ENCODE measurements at regions of chr17 and their contacts with region 1.

Region 1: DNA sequence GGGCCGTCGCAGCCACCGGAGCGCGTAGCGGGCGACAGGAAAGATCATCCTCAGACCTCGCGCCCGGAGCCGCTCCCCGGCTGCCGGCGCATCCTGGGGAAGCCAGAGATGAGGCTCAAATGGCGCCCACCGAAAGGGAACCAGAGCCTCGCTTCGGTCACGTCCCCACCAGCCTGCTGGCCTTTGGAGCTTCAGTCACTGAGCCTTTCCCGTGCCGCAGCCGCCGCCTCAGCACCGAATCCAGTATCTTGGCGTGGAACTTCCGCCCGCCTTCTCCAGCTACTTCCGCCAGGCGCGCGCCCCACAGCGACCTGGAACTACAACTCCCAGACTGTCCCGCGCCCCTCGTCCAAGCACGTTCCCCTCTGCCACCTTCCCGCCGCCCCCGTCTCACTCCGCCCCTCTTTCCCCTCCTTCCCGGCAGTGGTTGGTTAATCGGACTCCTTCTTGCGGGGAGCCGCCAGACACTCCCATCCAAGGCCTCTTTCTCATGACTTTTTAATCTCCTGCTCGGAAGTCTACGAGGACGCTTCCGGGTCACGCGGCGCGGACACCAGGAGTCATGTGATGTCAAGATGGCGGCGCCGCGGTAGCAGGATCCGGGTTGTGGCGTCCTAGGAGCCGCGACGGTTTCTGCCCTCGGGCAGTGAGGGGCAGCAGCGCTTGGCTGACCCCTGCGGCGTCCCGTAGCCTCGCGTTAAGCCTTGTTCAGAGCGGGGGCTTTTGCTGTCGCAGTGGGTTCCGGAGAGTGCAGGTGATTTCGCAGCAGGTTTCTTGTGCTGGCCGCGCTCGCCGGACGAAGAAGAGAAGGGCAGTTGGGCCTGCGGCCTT is at the starts of genes SMCR8 and TOP3A:
- DNase-seq: peak; percentile 86 to 99 (median 98)
- ATAC-seq: peak; percentile 96
- H3K4me3 ChIP-seq: peak within 1 kb of the TSS; percentile 95
- H3K4me3 Mint-ChIP-seq: peak within 1 kb of the TSS; percentile 89 to 98 (median 93)
- H3K27ac ChIP-seq: peak within 1 kb of the TSS; percentile 93
- H3K27ac Mint-ChIP-seq: peak within 1 kb of the TSS; percentile 92 to 99 (median 95)
- H3K4me1 ChIP-seq: peaks cover 50 to 54% of the 10 kb centered on the region in 2 donors
- H3K4me1 Mint-ChIP-seq: peaks cover 61 to 88% (median 83%) of the 10 kb centered on the region in 7 donors
- H3K27me3 ChIP-seq: no peaks in the 10 kb centered on the region
- H3K27me3 Mint-ChIP-seq: peaks cover 0 to 2% (median 0%) of the 10 kb centered on the region in 5 donors
- total RNA-seq, gene SMCR8: 29.0 to 61.7 (median 52.1) TPM
- total RNA-seq, gene TOP3A: 39.0 to 74.9 (median 43.6) TPM

Region 2: DNA sequence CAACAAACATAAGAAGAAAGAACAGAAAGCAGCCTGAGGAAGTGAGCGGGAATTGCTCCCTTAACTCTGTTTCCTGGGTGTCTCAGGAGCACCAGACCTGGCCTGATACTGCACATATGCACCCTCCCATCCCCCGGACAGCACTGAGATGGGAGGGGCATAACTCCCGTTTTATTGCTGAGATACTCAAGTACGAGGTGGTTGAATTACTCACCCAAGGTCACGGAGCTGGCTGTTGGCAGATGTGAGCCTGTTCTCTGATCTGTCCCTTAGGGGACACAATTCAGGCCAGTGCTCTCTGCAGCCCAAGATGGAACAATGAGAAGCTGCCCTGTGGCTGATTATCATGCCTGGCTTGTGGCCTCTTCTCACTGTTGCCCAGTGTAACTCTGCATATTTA is 847.2 kb before region 1 on chr17:
- CTCF ChIA-PET with region 1: no interaction called
- POLR2A ChIA-PET with region 1: no interaction called
- intact Hi-C with region 1: no loop called
- DNase-seq: no peak
- ATAC-seq: no peak
- H3K4me3 ChIP-seq: no peak overlapping the region
- H3K4me3 Mint-ChIP-seq: no peak overlapping the region
- H3K27ac ChIP-seq: no peak overlapping the region
- H3K27ac Mint-ChIP-seq: no peak overlapping the region
- H3K4me1 ChIP-seq: no peaks in the 10 kb centered on the region
- H3K4me1 Mint-ChIP-seq: no peaks in the 10 kb centered on the region
- H3K27me3 ChIP-seq: no peaks in the 10 kb centered on the region
- H3K27me3 Mint-ChIP-seq: peaks cover 12 to 20% (median 17%) of the 10 kb centered on the region in 5 donors

Region 3: DNA sequence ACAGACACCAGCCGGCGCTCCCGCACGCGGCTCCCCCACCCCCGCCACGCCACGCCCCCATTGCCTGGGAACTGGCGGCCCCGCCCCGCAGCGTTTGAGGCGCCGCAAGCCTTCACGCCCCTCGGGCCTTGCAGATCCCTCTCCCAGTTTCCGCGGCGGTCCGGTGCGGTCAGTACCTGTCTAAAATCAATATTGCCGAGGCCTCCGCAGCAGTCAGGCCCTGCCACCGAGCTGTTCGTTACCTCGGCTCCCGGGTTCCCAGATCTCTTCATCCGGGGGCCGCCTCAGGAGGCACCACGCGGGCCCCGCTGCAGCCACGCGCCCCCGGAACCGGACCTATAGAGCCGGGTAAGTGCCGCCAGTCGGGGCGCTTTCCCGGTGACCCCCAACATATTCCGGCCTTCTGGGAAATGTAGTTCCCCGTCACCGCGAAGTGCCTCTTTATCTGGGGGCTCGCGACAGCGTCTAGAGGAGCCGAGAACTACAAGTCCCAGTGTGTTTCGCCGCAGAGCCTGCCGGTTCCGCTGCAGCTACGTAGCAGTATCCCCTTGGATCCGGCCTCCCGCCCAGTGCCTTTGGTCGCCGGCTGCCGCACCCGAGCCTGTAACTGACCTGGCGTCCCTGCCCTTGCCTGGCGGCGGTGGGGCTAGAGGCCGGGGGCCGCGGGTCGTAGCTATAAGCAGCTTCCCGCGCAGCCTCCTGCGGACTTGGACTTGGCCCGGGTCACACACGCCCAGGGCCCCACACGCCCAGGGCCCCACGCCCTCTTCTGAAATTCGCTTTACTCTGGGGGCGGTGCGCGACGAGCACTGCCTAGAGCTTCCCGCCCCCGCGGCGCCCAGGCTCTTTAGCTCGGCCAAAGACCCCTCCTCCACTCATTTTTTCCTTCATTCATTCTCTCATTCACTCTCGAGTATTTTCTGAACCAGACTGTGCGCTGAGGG is 723.3 kb before region 1 on chr17 and contains the start of gene PEMT:
- CTCF ChIA-PET with region 1: no interaction called
- POLR2A ChIA-PET with region 1: no interaction called
- intact Hi-C with region 1: loop called in 1 of 2 experiments (anchors 10 kb)
- DNase-seq: peak; percentile 78 to 96 (median 93)
- ATAC-seq: peak; percentile 95
- H3K4me3 ChIP-seq: peak within 1 kb of the TSS; percentile 93
- H3K4me3 Mint-ChIP-seq: peak within 1 kb of the TSS; percentile 87 to 99 (median 93)
- H3K27ac ChIP-seq: peak within 1 kb of the TSS; percentile 79
- H3K27ac Mint-ChIP-seq: peak within 1 kb of the TSS; percentile 86 to 100 (median 93)
- H3K4me1 ChIP-seq: peaks cover 16 to 18% of the 10 kb centered on the region in 2 donors
- H3K4me1 Mint-ChIP-seq: peaks cover 14 to 32% (median 19%) of the 10 kb centered on the region in 7 donors
- H3K27me3 ChIP-seq: no peaks in the 10 kb centered on the region
- H3K27me3 Mint-ChIP-seq: no peaks in the 10 kb centered on the region
- total RNA-seq, gene PEMT: 9.5 to 15.0 (median 12.1) TPM

Region 4: GRCh38 chr17:18087610-18088491 is 227.1 kb before region 1 on chr17 and contains the start of gene DRG2:
- CTCF ChIA-PET with region 1: interaction called, 3 read pairs
- POLR2A ChIA-PET with region 1: no interaction called
- intact Hi-C with region 1: loop called in 1 of 2 experiments (anchors 2 kb)
- DNase-seq: peak; percentile 79 to 94 (median 85)
- ATAC-seq: peak; percentile 98
- H3K4me3 ChIP-seq: peak within 1 kb of the TSS; percentile 84
- H3K4me3 Mint-ChIP-seq: peak within 1 kb of the TSS; percentile 97 to 100 (median 98)
- H3K27ac ChIP-seq: peak within 1 kb of the TSS; percentile 85
- H3K27ac Mint-ChIP-seq: peak within 1 kb of the TSS; percentile 96 to 99 (median 98)
- H3K4me1 ChIP-seq: peaks cover 9 to 12% of the 10 kb centered on the region in 2 donors
- H3K4me1 Mint-ChIP-seq: peaks cover 19 to 35% (median 27%) of the 10 kb centered on the region in 7 donors
- H3K27me3 ChIP-seq: no peaks in the 10 kb centered on the region
- H3K27me3 Mint-ChIP-seq: no peaks in the 10 kb centered on the region
- total RNA-seq, gene DRG2: 39.6 to 54.7 (median 48.8) TPM

Region 5: GRCh38 chr17:18183334-18184142 is 131.4 kb before region 1 on chr17 and contains the start of gene ALKBH5:
- CTCF ChIA-PET with region 1: no interaction called
- POLR2A ChIA-PET with region 1: no interaction called
- intact Hi-C with region 1: loop called (anchors 1 kb)
- DNase-seq: peak; percentile 97 to 99 (median 99)
- ATAC-seq: peak; percentile 88
- H3K4me3 ChIP-seq: peak within 1 kb of the TSS; percentile 78
- H3K4me3 Mint-ChIP-seq: peak within 1 kb of the TSS; percentile 83 to 99 (median 94)
- H3K27ac ChIP-seq: peak within 1 kb of the TSS; percentile 93
- H3K27ac Mint-ChIP-seq: peak within 1 kb of the TSS; percentile 96 to 99 (median 98)
- H3K4me1 ChIP-seq: peaks cover 36 to 40% of the 10 kb centered on the region in 2 donors
- H3K4me1 Mint-ChIP-seq: peaks cover 40 to 59% (median 46%) of the 10 kb centered on the region in 7 donors
- H3K27me3 ChIP-seq: no peaks in the 10 kb centered on the region
- H3K27me3 Mint-ChIP-seq: peaks cover 0 to 3% (median 0%) of the 10 kb centered on the region in 5 donors
- total RNA-seq, gene ALKBH5: 97.4 to 135 (median 108) TPM

Region 6: DNA sequence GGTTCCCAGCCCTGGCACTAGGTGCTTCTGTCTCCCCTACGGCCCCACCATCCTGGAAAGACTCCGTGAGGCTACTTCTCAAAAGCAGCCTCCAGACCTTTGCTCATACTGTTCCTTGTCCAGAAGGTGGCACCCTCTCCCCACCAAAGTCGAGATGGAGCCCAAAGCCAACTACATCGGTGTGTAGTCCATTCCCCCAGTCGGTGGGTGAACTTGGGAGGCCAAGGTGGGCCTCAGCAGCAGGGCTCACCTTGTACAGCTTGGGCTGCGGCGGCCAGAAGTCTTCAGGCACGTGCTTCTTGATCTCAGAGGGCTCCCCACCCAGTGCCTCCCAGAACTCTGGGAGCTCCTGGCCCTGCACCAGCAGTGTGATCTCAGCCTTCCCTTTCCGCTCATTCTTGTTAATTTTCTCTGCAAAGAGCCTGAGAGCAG is 66.6 kb before region 1 on chr17:
- CTCF ChIA-PET with region 1: no interaction called
- POLR2A ChIA-PET with region 1: no interaction called
- intact Hi-C with region 1: loop called in 1 of 2 experiments (anchors 2 kb)
- DNase-seq: peak; percentile 47 to 75 (median 64)
- ATAC-seq: peak; percentile 84
- H3K4me3 ChIP-seq: no peak overlapping the region
- H3K4me3 Mint-ChIP-seq: no peak overlapping the region
- H3K27ac ChIP-seq: no peak overlapping the region
- H3K27ac Mint-ChIP-seq: peak overlapping the region in 7 of 9 donors; percentile 14 to 88 (median 62)
- H3K4me1 ChIP-seq: no peaks in the 10 kb centered on the region
- H3K4me1 Mint-ChIP-seq: peaks cover 0 to 8% (median 4%) of the 10 kb centered on the region in 7 donors
- H3K27me3 ChIP-seq: no peaks in the 10 kb centered on the region
- H3K27me3 Mint-ChIP-seq: no peaks in the 10 kb centered on the region

Region 7: GRCh38 chr17:18291718-18292540 is 23.0 kb before region 1 on chr17:
- CTCF ChIA-PET with region 1: no interaction called
- POLR2A ChIA-PET with region 1: no interaction called
- intact Hi-C with region 1: no loop called
- DNase-seq: no peak
- ATAC-seq: no peak
- H3K4me3 ChIP-seq: no peak overlapping the region
- H3K4me3 Mint-ChIP-seq: no peak overlapping the region
- H3K27ac ChIP-seq: no peak overlapping the region
- H3K27ac Mint-ChIP-seq: peak overlapping the region in 1 of 9 donors; percentile 25
- H3K4me1 ChIP-seq: no peaks in the 10 kb centered on the region
- H3K4me1 Mint-ChIP-seq: peaks cover 0 to 2% (median 0%) of the 10 kb centered on the region in 7 donors
- H3K27me3 ChIP-seq: no peaks in the 10 kb centered on the region
- H3K27me3 Mint-ChIP-seq: no peaks in the 10 kb centered on the region

Region 8: GRCh38 chr17:18363101-18364049 is 48.4 kb after region 1 on chr17 and contains the start of gene SHMT1:
- CTCF ChIA-PET with region 1: interaction called, 4 read pairs
- POLR2A ChIA-PET with region 1: interaction called, 5 read pairs
- intact Hi-C with region 1: loop called (anchors 2 to 5 kb)
- DNase-seq: peak; percentile 83 to 95 (median 88)
- ATAC-seq: peak; percentile 100
- H3K4me3 ChIP-seq: peak within 1 kb of the TSS; percentile 83
- H3K4me3 Mint-ChIP-seq: peak within 1 kb of the TSS; percentile 85 to 96 (median 92)
- H3K27ac ChIP-seq: peak within 1 kb of the TSS; percentile 65
- H3K27ac Mint-ChIP-seq: peak within 1 kb of the TSS; percentile 44 to 87 (median 81)
- H3K4me1 ChIP-seq: peaks cover 8 to 9% of the 10 kb centered on the region in 2 donors
- H3K4me1 Mint-ChIP-seq: peaks cover 10 to 27% (median 18%) of the 10 kb centered on the region in 7 donors
- H3K27me3 ChIP-seq: no peaks in the 10 kb centered on the region
- H3K27me3 Mint-ChIP-seq: peaks cover 0 to 1% (median 0%) of the 10 kb centered on the region in 5 donors
- total RNA-seq, gene SHMT1: 7.5 to 44.0 (median 14.7) TPM